ENCODE measurements at regions of chr3 and their contacts with region 1.

Region 1: DNA sequence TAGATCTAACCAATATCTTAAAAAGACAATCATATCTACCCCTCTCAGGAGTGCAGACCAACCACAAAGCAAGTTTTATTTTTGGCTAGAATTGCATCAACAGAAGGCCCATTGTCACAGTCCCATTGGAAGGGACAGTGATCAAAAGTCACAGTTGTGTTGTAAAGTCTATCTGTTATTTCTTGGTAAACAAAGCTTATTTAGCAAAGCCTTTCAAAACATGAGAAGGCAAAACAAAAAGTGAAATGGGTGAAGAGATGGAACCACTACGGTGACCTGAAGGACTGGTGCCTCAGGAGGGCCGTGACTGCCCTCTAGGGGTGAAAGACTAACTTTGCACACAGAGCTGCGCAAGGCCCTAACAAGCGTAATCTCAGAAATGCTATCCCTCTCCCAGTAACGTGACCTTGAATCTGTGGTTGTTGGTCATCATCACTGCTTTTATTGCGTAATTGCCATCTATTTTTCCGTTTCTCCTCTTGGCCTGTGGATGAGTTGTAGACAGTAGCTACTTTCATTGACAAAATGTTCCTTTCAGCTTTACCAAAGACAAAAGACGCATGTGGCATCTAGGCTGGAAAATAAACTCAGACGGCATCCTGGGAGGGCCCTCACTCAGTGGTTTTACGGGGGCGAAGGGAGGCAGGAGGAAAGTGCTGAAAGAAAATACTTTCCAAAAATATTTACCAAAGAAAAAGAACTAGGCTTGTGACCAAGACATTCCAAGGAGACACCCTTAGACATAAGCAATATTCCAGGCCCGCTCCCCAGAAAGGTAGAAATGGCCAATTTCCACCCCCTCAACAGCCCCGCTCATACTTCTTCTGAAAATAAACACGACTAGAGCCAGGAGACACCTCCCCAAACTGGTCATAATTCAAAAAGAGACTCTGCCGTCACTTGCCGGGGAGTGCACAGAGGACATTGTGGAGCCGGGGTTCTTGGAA is 79.4 kb downstream of the FRMD4B start:
- DNase-seq: peak; percentile 83
- ATAC-seq: peak; percentile 100
- H3K4me3 ChIP-seq: no peak overlapping the region
- H3K27ac ChIP-seq: no peak overlapping the region
- H3K4me1 ChIP-seq: no peaks in the 10 kb centered on the region
- H3K27me3 ChIP-seq: no peaks in the 10 kb centered on the region; the same call in 1 of the 2 replicates
- CTCF ChIP-seq: peak; percentile 88
- POLR2A ChIP-seq: no peak
- RAD21 ChIP-seq: peak; percentile 91

Region 2: DNA sequence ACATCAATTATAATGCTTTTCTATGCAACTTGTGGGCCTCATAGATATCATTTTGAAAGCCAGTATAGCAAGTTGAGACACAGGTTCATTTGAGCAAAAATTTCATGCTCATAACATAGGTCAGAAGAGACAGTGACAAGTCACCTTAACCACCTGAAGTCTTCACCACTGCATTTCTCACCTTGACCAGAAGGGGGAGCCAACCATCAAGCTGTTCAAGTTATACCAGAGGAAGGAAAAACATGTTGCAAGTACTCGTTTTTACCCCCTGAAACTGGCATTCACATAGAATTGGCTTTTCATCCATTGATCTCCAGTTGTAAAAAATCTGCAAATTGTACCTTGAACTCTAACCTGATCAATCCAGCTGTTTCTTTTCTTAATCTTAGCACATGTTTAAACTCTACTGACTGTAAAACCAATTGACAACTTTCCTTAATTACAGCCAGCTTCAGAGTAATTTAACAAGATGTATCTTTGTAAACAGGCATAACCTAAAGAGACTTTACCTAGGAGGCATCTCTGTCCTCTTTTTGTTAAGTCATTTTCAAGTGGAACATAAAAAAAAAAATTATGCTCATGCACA is 185.5 kb before region 1 on chr3:
- CTCF ChIA-PET with region 1: interaction called, 12 read pairs
- POLR2A ChIA-PET with region 1: no interaction called
- dilution Hi-C with region 1: no loop called
- in situ Hi-C with region 1: no loop called
- intact Hi-C with region 1: loop called (anchors 1 kb)
- DNase-seq: peak; percentile 76
- ATAC-seq: peak; percentile 75
- H3K4me3 ChIP-seq: no peak overlapping the region
- H3K27ac ChIP-seq: no peak overlapping the region
- H3K4me1 ChIP-seq: no peaks in the 10 kb centered on the region
- H3K27me3 ChIP-seq: peaks cover 7% of the 10 kb centered on the region
- CTCF ChIP-seq: peak; percentile 78
- POLR2A ChIP-seq: no peak
- RAD21 ChIP-seq: peak; percentile 67

Region 3: GRCh38 chr3:69200384-69201068 is 106.0 kb before region 1 on chr3:
- CTCF ChIA-PET with region 1: interaction called, 10 read pairs
- POLR2A ChIA-PET with region 1: no interaction called
- dilution Hi-C with region 1: no loop called
- in situ Hi-C with region 1: no loop called
- intact Hi-C with region 1: no loop called
- DNase-seq: peak; percentile 19
- ATAC-seq: peak; percentile 14; the same call in 1 of the 2 replicates
- H3K4me3 ChIP-seq: no peak overlapping the region
- H3K27ac ChIP-seq: no peak overlapping the region
- H3K4me1 ChIP-seq: no peaks in the 10 kb centered on the region
- H3K27me3 ChIP-seq: peaks cover 15% of the 10 kb centered on the region
- CTCF ChIP-seq: no peak
- POLR2A ChIP-seq: no peak
- RAD21 ChIP-seq: no peak

Region 4: DNA sequence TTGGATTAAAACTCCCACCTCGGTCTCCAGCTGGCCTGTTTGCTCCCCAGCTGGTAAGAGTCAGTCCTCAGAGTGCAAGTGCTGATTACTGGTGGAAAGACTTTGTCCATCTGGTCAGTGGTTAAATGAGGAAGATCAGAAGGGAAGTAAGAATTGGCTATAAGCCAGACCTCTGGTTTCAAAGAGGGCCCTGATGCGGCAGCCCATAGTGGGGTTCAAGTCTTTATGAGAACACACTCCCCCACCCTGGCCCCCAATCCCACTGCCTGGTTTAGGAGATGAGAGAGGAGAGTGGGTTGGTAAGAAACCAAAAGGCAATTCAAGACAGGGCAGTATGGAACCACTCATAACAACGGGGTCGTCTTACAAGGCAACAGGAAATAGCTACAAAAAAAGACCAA is 14.4 kb after region 1 on chr3:
- CTCF ChIA-PET with region 1: interaction called, 4 read pairs
- POLR2A ChIA-PET with region 1: interaction called, 17 read pairs
- dilution Hi-C with region 1: no loop called
- in situ Hi-C with region 1: no loop called
- intact Hi-C with region 1: no loop called
- DNase-seq: no peak
- ATAC-seq: no peak
- H3K4me3 ChIP-seq: no peak overlapping the region
- H3K27ac ChIP-seq: no peak overlapping the region
- H3K4me1 ChIP-seq: no peaks in the 10 kb centered on the region
- H3K27me3 ChIP-seq: no peaks in the 10 kb centered on the region
- CTCF ChIP-seq: no peak
- POLR2A ChIP-seq: no peak
- RAD21 ChIP-seq: no peak

Region 5: GRCh38 chr3:69671082-69671952 is 364.8 kb after region 1 on chr3:
- CTCF ChIA-PET with region 1: no interaction called
- POLR2A ChIA-PET with region 1: no interaction called
- dilution Hi-C with region 1: no loop called
- in situ Hi-C with region 1: loop called (anchors 10 kb)
- intact Hi-C with region 1: loop called (anchors 2 kb)
- DNase-seq: peak; percentile 42
- ATAC-seq: peak; percentile 75
- H3K4me3 ChIP-seq: no peak overlapping the region
- H3K27ac ChIP-seq: no peak overlapping the region
- H3K4me1 ChIP-seq: no peaks in the 10 kb centered on the region
- H3K27me3 ChIP-seq: peaks cover 2% of the 10 kb centered on the region; the same call in 1 of the 2 replicates
- CTCF ChIP-seq: peak; percentile 77
- POLR2A ChIP-seq: no peak
- RAD21 ChIP-seq: peak; percentile 77

Region 6: GRCh38 chr3:69791919-69792399 is 485.4 kb after region 1 on chr3:
- CTCF ChIA-PET with region 1: no interaction called
- POLR2A ChIA-PET with region 1: no interaction called
- dilution Hi-C with region 1: no loop called
- in situ Hi-C with region 1: no loop called
- intact Hi-C with region 1: loop called (anchors 2 kb)
- DNase-seq: peak; percentile 72
- ATAC-seq: peak; percentile 70
- H3K4me3 ChIP-seq: no peak overlapping the region
- H3K27ac ChIP-seq: peak overlapping the region; percentile 83; the same call in 1 of the 2 replicates
- H3K4me1 ChIP-seq: peaks cover 15% of the 10 kb centered on the region
- H3K27me3 ChIP-seq: no peaks in the 10 kb centered on the region
- CTCF ChIP-seq: peak; percentile 71
- POLR2A ChIP-seq: no peak
- RAD21 ChIP-seq: peak; percentile 83

Region 7: DNA sequence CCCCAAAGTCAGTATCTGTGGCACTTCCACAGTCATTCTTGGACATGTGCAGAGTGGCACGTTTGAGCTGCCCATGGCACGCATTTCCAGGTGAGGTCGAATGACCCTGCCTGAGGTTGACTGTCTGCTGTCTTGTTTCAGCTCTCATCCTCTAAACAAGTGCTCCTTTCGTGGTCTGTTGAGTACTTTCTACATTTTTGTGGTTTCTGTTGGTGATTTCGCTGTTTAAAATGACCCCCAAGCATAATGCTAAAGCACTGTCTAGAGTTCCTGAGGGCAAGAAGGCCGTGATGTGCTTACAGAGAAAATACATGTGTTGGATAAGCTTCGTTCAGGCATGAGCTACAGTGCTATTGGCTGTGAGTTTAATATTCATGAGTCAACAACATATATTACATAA is 653.1 kb after region 1 on chr3:
- CTCF ChIA-PET with region 1: no interaction called
- POLR2A ChIA-PET with region 1: no interaction called
- dilution Hi-C with region 1: no loop called
- in situ Hi-C with region 1: no loop called
- intact Hi-C with region 1: loop called (anchors 10 kb)
- DNase-seq: no peak
- ATAC-seq: no peak
- H3K4me3 ChIP-seq: no peak overlapping the region
- H3K27ac ChIP-seq: no peak overlapping the region
- H3K4me1 ChIP-seq: no peaks in the 10 kb centered on the region
- H3K27me3 ChIP-seq: no peaks in the 10 kb centered on the region
- CTCF ChIP-seq: no peak
- POLR2A ChIP-seq: no peak
- RAD21 ChIP-seq: no peak

Measured in IMR-90 (cell line).